Colonic mucosa (tissue), 4 donors: ENCODE measurements at regions of chr7 and their contacts with region 1.

Region 1: DNA sequence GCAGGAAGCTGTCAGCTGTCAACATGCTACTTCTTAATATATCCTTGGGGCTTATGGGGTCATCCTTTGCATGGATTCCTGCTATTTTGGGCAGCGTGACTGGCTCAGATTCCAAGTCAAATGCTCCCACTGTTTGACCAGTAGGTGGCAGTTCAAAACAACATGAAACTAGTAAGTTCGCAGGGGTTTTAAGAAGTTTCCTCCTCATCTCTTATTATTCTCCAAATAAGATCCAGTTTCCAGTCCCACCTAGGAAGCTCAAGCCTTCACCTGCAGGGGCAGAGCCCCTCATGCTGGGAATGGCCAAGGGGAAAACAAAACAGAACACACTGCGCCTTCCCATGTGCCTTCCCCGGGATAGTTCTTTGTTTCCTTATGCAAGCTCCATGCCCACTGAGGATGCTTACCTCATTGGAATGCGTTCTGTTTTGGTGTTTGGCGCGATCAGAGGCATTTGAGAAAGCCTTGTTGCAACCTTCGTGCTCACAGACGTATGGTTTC is 259.8 kb downstream of the GLI3 start:
- DNase-seq: no peak
- H3K4me3 ChIP-seq: no peak overlapping the region
- H3K27ac ChIP-seq: no peak overlapping the region
- H3K4me1 ChIP-seq: no peaks in the 10 kb centered on the region
- H3K27me3 ChIP-seq: no peaks in the 10 kb centered on the region
- CTCF ChIP-seq: peak; percentile 59

Region 2: GRCh38 chr7:41383596-41383995 is 593.6 kb before region 1 on chr7:
- intact Hi-C with region 1: no loop called
- DNase-seq: no peak
- H3K4me3 ChIP-seq: no peak overlapping the region
- H3K27ac ChIP-seq: no peak overlapping the region
- H3K4me1 ChIP-seq: no peaks in the 10 kb centered on the region
- H3K27me3 ChIP-seq: no peaks in the 10 kb centered on the region
- CTCF ChIP-seq: no peak

Region 3: DNA sequence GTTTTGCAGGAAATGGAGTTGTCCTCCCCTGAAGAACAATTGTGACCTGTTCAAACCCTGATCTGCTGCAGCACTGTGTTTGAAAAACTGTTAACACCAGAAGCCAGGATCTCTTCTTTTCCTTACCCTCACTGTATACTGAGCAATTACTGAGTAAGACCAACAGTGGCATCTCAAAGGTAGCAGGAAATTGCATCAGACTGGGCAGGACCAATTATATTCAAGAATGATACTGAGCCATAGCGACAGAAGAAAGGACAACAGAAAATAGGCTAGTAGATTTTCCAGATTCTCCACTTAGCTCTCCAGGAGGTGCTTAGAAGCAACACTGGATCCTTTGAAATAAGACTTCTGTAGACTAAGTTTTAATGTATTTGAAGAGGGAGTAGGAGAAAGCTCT is 216.9 kb before region 1 on chr7:
- intact Hi-C with region 1: no loop called
- DNase-seq: no peak
- H3K4me3 ChIP-seq: no peak overlapping the region
- H3K27ac ChIP-seq: no peak overlapping the region
- H3K4me1 ChIP-seq: no peaks in the 10 kb centered on the region
- H3K27me3 ChIP-seq: no peaks in the 10 kb centered on the region
- CTCF ChIP-seq: no peak

Region 4: DNA sequence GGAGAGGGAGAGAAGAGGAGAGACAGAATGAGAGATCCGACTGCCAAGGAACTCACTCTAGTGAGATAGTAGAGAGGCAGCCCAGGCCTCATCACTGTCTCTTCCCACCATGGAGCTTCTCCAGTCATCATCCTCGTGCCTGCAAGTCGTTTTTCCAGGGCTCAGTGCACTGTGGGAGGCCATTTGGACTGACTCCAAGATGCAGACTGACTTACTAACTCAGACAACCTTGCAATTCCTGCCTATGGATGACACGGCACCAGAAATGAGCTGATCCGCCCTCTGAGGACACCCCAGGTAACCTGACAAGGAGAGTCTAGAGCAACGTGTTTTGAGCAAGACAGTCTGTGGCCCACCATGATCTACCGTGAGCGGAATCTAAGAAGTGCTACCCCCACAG is 104.9 kb after region 1 on chr7:
- intact Hi-C with region 1: loop called (anchors 10 kb)
- DNase-seq: no peak
- H3K4me3 ChIP-seq: no peak overlapping the region
- H3K27ac ChIP-seq: no peak overlapping the region
- H3K4me1 ChIP-seq: no peaks in the 10 kb centered on the region
- H3K27me3 ChIP-seq: no peaks in the 10 kb centered on the region
- CTCF ChIP-seq: no peak

Region 5: GRCh38 chr7:42097757-42098191 is 120.6 kb after region 1 on chr7:
- intact Hi-C with region 1: no loop called
- DNase-seq: no peak
- H3K4me3 ChIP-seq: no peak overlapping the region
- H3K27ac ChIP-seq: no peak overlapping the region
- H3K4me1 ChIP-seq: peaks cover 3% of the 10 kb centered on the region
- H3K27me3 ChIP-seq: no peaks in the 10 kb centered on the region
- CTCF ChIP-seq: no peak

Region 6: DNA sequence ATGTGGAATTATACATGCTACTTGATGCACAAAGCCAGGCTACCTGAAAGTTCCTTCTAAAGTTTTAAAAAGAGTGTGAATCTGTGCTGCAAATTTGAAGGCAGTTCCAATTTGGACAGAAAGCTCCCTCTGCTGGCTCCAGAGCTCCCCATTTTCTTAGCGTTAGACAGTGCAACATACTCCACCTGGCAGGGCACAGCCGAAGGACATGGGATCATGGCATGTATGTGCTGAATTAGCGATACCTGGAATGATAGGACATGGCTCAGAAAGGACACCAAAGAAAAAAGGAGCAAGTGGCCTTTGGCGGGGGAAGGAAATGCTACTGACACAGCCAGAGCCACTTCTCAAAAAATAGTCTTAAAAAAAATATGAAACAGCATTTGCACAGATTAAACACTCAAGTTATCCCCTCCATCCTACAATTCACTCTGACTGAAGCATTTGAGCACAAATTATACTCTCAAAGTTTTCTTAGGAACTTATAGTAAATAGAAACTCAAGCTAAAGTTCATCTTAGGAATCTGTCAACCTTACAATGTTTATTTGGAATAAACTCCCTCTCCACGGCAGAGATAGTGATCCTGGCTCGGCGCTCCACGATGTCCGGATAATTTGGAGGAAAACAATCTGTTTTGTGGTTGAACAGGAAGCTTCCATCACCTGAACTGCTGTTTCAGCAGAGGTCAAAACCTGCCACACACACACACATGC is 854.7 kb after region 1 on chr7:
- intact Hi-C with region 1: loop called (anchors 10 kb)
- DNase-seq: peak; percentile 42
- H3K4me3 ChIP-seq: no peak overlapping the region
- H3K27ac ChIP-seq: no peak overlapping the region
- H3K4me1 ChIP-seq: no peaks in the 10 kb centered on the region
- H3K27me3 ChIP-seq: no peaks in the 10 kb centered on the region
- CTCF ChIP-seq: peak; percentile 23